Right lobe of liver (tissue), 6 donors: ENCODE measurements at regions of chr14 and their contacts with region 1.

Region 1: GRCh38 chr14:35121887-35122695 is at the starts of genes PPP2R3C and PRORP:
- DNase-seq: peak; percentile 93 to 98 (median 98)
- ATAC-seq: peak; percentile 85 to 89 (median 88)
- H3K4me3 ChIP-seq: peak within 1 kb of the TSS; percentile 73 to 92 (median 87)
- H3K27ac ChIP-seq: peak within 1 kb of the TSS; percentile 96 to 97 (median 97)
- H3K4me1 ChIP-seq: peaks cover 0 to 28% (median 0%) of the 10 kb centered on the region in 4 donors
- H3K27me3 ChIP-seq: no peaks in the 10 kb centered on the region
- CTCF ChIP-seq: no peak
- POLR2A ChIP-seq: peak; percentile 78
- total RNA-seq, gene PPP2R3C: 6.8 to 15.6 (median 9.4) TPM
- total RNA-seq, gene PRORP: 15.2 to 22.2 (median 19.7) TPM

Region 2: GRCh38 chr14:35046048-35046741 is 75.9 kb before region 1 on chr14 and contains the start of gene FAM177A1:
- intact Hi-C with region 1: loop called in 1 of 2 experiments (anchors 5 kb)
- DNase-seq: peak; percentile 99
- ATAC-seq: peak; percentile 93 to 98 (median 95)
- H3K4me3 ChIP-seq: peak within 1 kb of the TSS; percentile 80 to 87 (median 84)
- H3K27ac ChIP-seq: peak within 1 kb of the TSS; percentile 93 to 97 (median 94)
- H3K4me1 ChIP-seq: peaks cover 0 to 34% (median 9%) of the 10 kb centered on the region in 4 donors
- H3K27me3 ChIP-seq: no peaks in the 10 kb centered on the region
- CTCF ChIP-seq: no peak
- POLR2A ChIP-seq: peak; percentile 99
- total RNA-seq, gene FAM177A1: 44.2 to 48.4 (median 47.2) TPM